Mammary epithelial cell (primary cell): ENCODE measurements at regions of chr5 and their contacts with region 1.

Region 1: GRCh38 chr5:61280205-61280604 is 51.9 kb upstream of the ZSWIM6 start:
- DNase-seq: peak; percentile 89
- H3K4me3 ChIP-seq: no peak overlapping the region
- H3K27ac ChIP-seq: peak overlapping the region; percentile 52
- H3K4me1 ChIP-seq: peaks cover 34% of the 10 kb centered on the region
- H3K27me3 ChIP-seq: no peaks in the 10 kb centered on the region
- CTCF ChIP-seq: no peak

Region 2: DNA sequence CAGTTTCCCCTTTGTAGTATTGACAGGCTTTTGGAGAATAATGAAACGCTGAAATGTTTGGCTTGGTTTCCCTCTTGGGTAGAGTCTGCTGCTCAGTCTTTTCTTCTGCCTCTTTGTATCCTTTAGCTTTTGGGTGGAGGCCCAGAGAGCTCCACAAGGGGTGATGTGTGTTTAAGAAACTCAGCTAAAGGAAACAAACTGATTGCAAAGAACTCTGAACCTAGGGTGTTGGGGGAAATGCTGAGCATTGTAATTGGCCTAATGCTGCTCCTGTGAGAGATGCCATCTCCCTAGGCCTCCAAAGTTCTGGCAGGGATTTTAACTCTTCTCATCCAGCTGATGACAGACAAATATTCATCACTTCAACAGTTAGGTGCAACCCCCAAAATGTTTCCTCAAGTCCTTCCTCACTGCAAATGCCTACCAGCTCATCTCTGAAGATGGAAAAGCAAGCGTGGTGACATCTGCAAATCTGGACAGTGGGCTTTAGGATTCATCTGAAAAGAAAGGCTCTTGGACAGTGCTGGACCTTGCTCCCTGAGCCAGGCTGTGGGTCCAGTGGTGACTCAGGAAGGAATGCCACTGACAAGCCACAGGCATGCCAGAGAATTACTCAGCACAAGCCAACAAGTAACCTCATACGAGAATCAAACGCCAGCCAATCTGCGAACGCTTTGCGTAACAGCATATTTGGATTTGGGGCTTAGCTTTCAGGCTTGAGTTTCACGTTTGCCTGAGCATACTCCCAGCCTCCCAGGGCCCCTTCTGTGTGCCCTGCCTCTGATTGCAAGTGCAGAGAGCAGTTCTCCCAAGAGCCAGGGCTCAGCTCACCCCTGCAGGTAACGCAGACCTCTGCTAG is 21.4 kb after region 1 on chr5:
- CTCF ChIA-PET with region 1: no interaction called
- dilution Hi-C with region 1: no loop called
- in situ Hi-C with region 1: no loop called
- intact Hi-C with region 1: loop called (anchors 1 kb)
- DNase-seq: peak; percentile 97
- H3K4me3 ChIP-seq: no peak overlapping the region
- H3K27ac ChIP-seq: peak overlapping the region; percentile 78
- H3K4me1 ChIP-seq: peaks cover 72% of the 10 kb centered on the region
- H3K27me3 ChIP-seq: no peaks in the 10 kb centered on the region
- CTCF ChIP-seq: no peak

Region 3: DNA sequence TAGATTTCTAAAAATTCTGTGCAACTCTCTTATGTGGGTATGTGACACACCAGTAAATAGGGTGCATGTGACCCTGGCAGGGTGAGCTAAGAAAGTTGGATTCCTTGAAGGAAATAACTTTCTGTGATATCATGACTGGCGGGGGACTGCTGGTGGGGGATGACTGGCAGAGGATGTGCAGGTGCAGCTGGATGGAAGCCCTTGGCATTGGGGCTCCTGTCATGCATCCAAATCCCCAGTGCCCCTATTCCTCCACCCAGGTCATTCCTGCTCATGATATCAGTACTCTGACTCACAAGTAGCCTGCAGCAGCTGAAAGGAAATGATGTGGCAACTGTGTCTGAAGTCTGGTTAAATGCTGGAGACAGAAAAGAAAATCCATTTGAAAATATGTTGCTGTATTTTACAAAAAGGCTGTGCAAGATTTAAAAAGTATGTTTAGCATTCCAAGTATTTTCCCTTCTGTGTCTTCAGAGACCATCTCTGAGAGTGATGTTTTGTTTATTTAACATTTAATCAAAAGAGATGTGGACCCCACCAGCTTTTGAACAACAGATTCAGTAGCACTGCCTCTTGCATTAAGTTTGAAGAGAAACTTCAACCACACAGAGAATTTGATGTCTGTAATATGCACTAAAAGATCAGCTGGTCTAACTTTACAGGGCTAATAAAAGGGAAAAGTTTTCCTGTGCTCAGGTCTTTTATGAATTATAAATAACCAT is 33.9 kb after region 1 on chr5:
- CTCF ChIA-PET with region 1: no interaction called
- dilution Hi-C with region 1: no loop called
- in situ Hi-C with region 1: no loop called
- intact Hi-C with region 1: loop called (anchors 5 kb)
- DNase-seq: peak; percentile 79
- H3K4me3 ChIP-seq: no peak overlapping the region
- H3K27ac ChIP-seq: no peak overlapping the region
- H3K4me1 ChIP-seq: peaks cover 21% of the 10 kb centered on the region
- H3K27me3 ChIP-seq: no peaks in the 10 kb centered on the region
- CTCF ChIP-seq: no peak

Region 4: GRCh38 chr5:61408476-61409168 is 128.4 kb after region 1 on chr5:
- CTCF ChIA-PET with region 1: no interaction called
- dilution Hi-C with region 1: no loop called
- in situ Hi-C with region 1: no loop called
- intact Hi-C with region 1: loop called (anchors 10 kb)
- DNase-seq: peak; percentile 100
- H3K4me3 ChIP-seq: peak overlapping the region; percentile 2 to 54 (median 35)
- H3K27ac ChIP-seq: peak overlapping the region; percentile 100
- H3K4me1 ChIP-seq: peaks cover 21% of the 10 kb centered on the region
- H3K27me3 ChIP-seq: no peaks in the 10 kb centered on the region
- CTCF ChIP-seq: no peak

Region 5: DNA sequence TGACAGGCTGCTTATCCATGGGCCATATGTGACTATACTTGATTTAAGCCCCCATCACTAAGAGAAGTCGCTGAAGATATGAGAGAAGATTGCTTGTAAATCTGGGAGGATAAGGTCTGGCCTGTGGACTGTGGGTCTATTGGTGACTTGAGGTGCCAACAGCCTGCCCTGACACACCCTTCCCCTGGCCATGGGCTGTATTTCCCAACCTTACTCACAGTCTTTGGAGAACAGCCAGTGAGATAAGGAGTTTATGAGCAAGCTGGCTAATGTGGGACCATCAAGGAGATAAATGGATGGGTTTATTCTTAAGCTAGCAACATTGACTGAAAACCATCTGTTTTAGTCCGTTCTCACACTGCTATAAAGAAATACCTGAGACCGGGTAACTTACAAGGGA is 283.2 kb after region 1 on chr5:
- CTCF ChIA-PET with region 1: no interaction called
- dilution Hi-C with region 1: no loop called
- in situ Hi-C with region 1: no loop called
- intact Hi-C with region 1: no loop called
- DNase-seq: peak; percentile 6
- H3K4me3 ChIP-seq: no peak overlapping the region
- H3K27ac ChIP-seq: no peak overlapping the region
- H3K4me1 ChIP-seq: no peaks in the 10 kb centered on the region
- H3K27me3 ChIP-seq: no peaks in the 10 kb centered on the region
- CTCF ChIP-seq: no peak